Dendritic cell treated with granulocyte-macrophage colony-stimulating factor and Interleukin-4, amounts not matched to agents 40 ng/mL and 50 ng/mL, for 4 days (primary cell): ENCODE measurements at regions of chr11 and their contacts with region 1.

Region 1: GRCh38 chr11:66638177-66639065 is at the start of gene RBM4:
- H3K4me3 Mint-ChIP-seq: peak within 1 kb of the TSS; percentile 96
- H3K27ac Mint-ChIP-seq: peak within 1 kb of the TSS; percentile 97
- H3K4me1 Mint-ChIP-seq: peaks cover 70% of the 10 kb centered on the region
- H3K27me3 Mint-ChIP-seq: no peaks in the 10 kb centered on the region

Region 2: DNA sequence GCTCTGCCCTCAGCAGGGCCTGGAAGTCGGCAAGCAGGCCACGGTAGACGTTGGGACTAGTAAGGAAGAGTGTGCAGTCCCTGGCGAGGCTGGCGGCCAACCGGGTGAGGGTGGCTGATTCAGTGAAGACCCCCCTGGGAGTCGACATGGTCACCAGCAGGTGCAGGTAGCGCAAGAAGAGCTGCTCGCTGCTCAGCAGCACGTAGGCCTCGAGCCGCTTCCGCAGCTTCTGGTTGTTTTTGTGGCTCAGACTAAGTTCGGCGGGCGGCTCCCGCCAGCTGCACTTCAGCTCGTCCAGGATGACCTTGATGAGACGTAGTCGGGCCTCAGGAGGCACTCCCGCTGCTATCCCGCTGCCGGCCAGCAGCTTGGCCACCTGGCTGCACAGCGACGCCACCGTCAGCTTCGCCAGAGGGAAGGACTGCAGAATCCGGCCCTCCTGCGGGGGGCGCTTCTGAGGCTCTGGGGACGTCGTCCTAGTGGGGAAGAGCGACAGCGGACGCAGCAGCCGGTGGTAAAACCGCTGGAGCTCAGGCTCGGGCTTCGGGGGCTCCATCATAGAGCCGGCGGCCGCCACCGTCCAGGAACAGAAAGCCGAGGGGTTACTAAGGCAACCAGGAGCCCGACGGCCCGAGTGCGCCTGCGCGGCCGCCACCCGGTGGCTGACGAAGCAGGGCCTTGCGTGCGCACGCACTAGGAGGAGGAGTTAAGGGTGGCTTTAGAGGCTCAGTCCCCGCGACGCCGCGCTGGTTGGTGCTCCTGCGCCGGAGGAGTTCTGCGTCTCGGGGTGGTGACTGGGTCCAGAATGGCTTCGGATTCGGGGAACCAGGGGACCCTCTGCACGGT is 45.7 kb before region 1 on chr11 and contains the starts of genes CCDC87 and CCS:
- intact Hi-C with region 1: loop called (anchors 1 kb)
- H3K4me3 Mint-ChIP-seq: peak within 1 kb of the TSS; percentile 98
- H3K27ac Mint-ChIP-seq: peak within 1 kb of the TSS; percentile 91
- H3K4me1 Mint-ChIP-seq: peaks cover 32% of the 10 kb centered on the region
- H3K27me3 Mint-ChIP-seq: peaks cover 3% of the 10 kb centered on the region

Region 3: GRCh38 chr11:66616379-66617154 is 21.9 kb before region 1 on chr11 and contains the start of gene RBM14:
- intact Hi-C with region 1: loop called (anchors 1 kb)
- H3K4me3 Mint-ChIP-seq: peak within 1 kb of the TSS; percentile 99
- H3K27ac Mint-ChIP-seq: peak within 1 kb of the TSS; percentile 100
- H3K4me1 Mint-ChIP-seq: peaks cover 36% of the 10 kb centered on the region
- H3K27me3 Mint-ChIP-seq: no peaks in the 10 kb centered on the region

Region 4: DNA sequence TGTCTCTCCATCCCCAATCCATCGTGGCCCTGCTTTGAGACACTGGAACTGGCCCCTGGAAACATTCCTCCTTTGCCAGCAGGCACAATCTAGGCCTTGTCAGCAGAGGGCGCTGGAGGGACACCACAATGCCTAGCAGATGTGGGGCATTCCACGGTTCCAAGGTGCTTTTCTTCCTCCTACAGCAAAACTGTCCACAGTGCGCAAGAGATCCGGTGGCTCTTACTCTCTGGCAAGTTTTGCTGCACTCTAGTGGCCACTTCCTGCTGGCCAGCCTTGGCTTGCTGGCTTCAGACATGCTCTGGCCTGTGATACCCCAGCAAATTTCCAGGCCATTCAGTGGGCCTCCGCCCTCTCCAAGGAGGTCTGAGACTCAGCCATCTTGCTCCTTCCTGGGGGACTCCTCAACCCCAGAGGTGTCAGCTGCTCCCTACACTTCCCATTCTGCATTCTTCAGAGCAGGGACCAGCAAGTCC is 56.3 kb after region 1 on chr11:
- intact Hi-C with region 1: no loop called
- H3K4me3 Mint-ChIP-seq: no peak overlapping the region
- H3K27ac Mint-ChIP-seq: no peak overlapping the region
- H3K4me1 Mint-ChIP-seq: no peaks in the 10 kb centered on the region
- H3K27me3 Mint-ChIP-seq: peaks cover 3% of the 10 kb centered on the region